ENCODE measurements at regions of chr12 and their contacts with region 1.

Region 1: GRCh38 chr12:71746983-71747611 is 7.6 kb upstream of the RAB21 start:
- DNase-seq: peak in 8 of 9 experiments; percentile 21 to 78 (median 46)
- ATAC-seq: peak; percentile 98
- H3K4me3 ChIP-seq: no peak overlapping the region
- H3K4me3 Mint-ChIP-seq: no peak overlapping the region
- H3K27ac ChIP-seq: no peak overlapping the region
- H3K27ac Mint-ChIP-seq: no peak overlapping the region
- H3K4me1 ChIP-seq: no peaks in the 10 kb centered on the region
- H3K4me1 Mint-ChIP-seq: no peaks in the 10 kb centered on the region
- H3K27me3 ChIP-seq: no peaks in the 10 kb centered on the region
- H3K27me3 Mint-ChIP-seq: peaks cover 18% of the 10 kb centered on the region
- CTCF ChIP-seq: peak; percentile 91

Region 2: DNA sequence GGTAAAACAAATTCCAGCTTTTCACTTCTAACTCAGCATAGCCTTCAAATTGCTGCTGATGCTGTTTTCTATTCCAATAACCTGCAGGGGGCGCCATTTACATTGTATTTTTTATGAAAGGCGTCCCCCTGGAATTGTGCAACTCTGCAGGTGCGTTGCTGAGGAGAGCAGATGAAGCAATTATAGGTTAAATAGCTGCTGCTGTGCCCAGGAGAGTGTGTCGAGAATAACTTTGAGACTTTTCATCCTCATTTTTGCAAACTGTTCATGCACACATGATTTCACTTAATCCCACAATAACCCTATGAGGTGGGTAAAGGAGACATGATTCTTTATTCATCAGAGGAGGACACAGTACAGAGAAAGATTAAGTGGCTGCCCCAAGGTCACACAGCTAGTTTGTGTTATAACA is 1846.4 kb before region 1 on chr12:
- CTCF ChIA-PET with region 1: interaction called, 8 read pairs
- POLR2A ChIA-PET with region 1: no interaction called
- intact Hi-C with region 1: loop called in 1 of 2 experiments (anchors 5 kb)
- DNase-seq: peak; percentile 18 to 77 (median 62)
- ATAC-seq: no peak
- H3K4me3 ChIP-seq: no peak overlapping the region
- H3K4me3 Mint-ChIP-seq: no peak overlapping the region
- H3K27ac ChIP-seq: no peak overlapping the region
- H3K27ac Mint-ChIP-seq: no peak overlapping the region
- H3K4me1 ChIP-seq: no peaks in the 10 kb centered on the region
- H3K4me1 Mint-ChIP-seq: no peaks in the 10 kb centered on the region
- H3K27me3 ChIP-seq: no peaks in the 10 kb centered on the region
- H3K27me3 Mint-ChIP-seq: peaks cover 3% of the 10 kb centered on the region
- CTCF ChIP-seq: peak; percentile 91

Region 3: GRCh38 chr12:70733385-70733784 is 1013.7 kb before region 1 on chr12:
- CTCF ChIA-PET with region 1: interaction called, 4 read pairs
- POLR2A ChIA-PET with region 1: no interaction called
- intact Hi-C with region 1: loop called (anchors 5 to 10 kb)
- DNase-seq: peak in 2 of 9 experiments; percentile 19 to 52
- ATAC-seq: no peak
- H3K4me3 ChIP-seq: no peak overlapping the region
- H3K4me3 Mint-ChIP-seq: no peak overlapping the region
- H3K27ac ChIP-seq: no peak overlapping the region
- H3K27ac Mint-ChIP-seq: no peak overlapping the region
- H3K4me1 ChIP-seq: no peaks in the 10 kb centered on the region
- H3K4me1 Mint-ChIP-seq: no peaks in the 10 kb centered on the region
- H3K27me3 ChIP-seq: peaks cover 0 to 3% of the 10 kb centered on the region in 2 experiments
- H3K27me3 Mint-ChIP-seq: peaks cover 2% of the 10 kb centered on the region
- CTCF ChIP-seq: peak; percentile 31

Region 4: DNA sequence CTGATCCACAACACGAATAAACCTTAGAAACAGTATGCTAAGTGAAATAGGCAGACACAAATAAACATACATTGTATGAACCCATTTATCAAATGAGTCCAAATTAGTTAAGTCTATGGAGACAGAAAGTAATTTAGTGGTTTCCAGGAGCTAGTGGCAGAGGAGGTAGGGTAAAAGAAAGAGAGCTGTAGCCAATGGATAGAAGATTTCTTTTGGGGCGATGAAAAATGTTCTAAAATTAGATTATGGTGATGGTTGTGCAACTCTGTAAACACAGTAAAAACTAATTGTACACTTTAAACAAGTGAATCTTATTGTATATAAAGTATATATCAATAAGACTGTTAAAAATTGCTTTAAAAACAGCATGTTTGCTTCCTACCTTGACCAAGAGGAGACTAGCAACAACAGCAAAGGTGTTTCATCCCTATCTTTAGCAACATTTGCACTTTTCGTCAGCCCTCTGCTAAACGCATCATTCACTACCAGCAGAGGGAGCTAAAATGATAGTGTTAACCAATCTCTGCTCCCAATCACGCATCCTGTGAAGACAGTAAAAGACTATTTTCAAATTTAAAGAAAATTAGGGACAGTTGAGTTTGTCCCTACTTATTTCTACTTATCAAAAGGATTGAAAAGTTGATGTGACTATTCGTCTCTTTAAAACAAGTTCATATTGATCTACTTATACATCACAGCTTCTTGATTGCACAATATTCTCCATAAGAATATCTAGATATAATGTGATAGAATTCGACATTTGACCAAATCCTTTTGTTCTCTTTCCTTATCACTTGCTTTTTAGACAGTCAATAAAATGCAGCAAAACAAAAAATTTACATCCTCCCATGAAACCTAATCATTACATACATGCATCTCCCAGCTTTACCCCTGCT is 331.5 kb before region 1 on chr12:
- CTCF ChIA-PET with region 1: interaction called, 81 read pairs
- POLR2A ChIA-PET with region 1: interaction called, 6 read pairs
- intact Hi-C with region 1: loop called (anchors 1 kb)
- DNase-seq: peak in 3 of 9 experiments; percentile 9 to 66 (median 54)
- ATAC-seq: no peak
- H3K4me3 ChIP-seq: no peak overlapping the region
- H3K4me3 Mint-ChIP-seq: no peak overlapping the region
- H3K27ac ChIP-seq: no peak overlapping the region
- H3K27ac Mint-ChIP-seq: no peak overlapping the region
- H3K4me1 ChIP-seq: no peaks in the 10 kb centered on the region
- H3K4me1 Mint-ChIP-seq: no peaks in the 10 kb centered on the region
- H3K27me3 ChIP-seq: no peaks in the 10 kb centered on the region
- H3K27me3 Mint-ChIP-seq: peaks cover 3% of the 10 kb centered on the region
- CTCF ChIP-seq: peak; percentile 68

Region 5: DNA sequence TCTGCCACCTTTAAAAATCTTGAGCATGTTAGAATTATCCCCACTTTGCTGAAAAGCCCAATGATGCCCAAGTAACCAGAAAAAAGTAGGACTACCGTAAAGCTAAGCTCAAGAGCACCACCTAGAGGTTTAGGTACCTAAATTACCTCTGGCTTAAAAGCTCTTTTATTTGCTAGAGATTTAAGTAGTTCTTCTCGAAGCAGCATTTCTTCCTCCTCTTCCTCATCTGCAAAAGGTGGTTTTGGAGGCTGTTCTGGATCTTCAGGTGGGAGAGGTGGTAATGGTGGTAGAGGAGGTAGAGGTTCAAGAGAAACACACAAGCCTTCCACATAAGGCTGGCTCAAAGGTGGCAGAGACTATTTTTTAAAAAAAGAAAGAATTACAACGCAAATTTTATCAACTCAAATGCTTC is 110.4 kb before region 1 on chr12:
- CTCF ChIA-PET with region 1: interaction called, 15 read pairs
- POLR2A ChIA-PET with region 1: no interaction called
- intact Hi-C with region 1: loop called (anchors 1 to 2 kb)
- DNase-seq: peak in 2 of 9 experiments; percentile 69 to 79
- ATAC-seq: peak; percentile 80
- H3K4me3 ChIP-seq: no peak overlapping the region
- H3K4me3 Mint-ChIP-seq: no peak overlapping the region
- H3K27ac ChIP-seq: no peak overlapping the region
- H3K27ac Mint-ChIP-seq: peak overlapping the region; percentile 78
- H3K4me1 ChIP-seq: no peaks in the 10 kb centered on the region
- H3K4me1 Mint-ChIP-seq: peaks cover 13% of the 10 kb centered on the region
- H3K27me3 ChIP-seq: no peaks in the 10 kb centered on the region
- H3K27me3 Mint-ChIP-seq: no peaks in the 10 kb centered on the region
- CTCF ChIP-seq: peak; percentile 82

Region 6: GRCh38 chr12:71685914-71686665 is 61.0 kb before region 1 on chr12 and contains the start of gene TMEM19:
- CTCF ChIA-PET with region 1: interaction called, 23 read pairs
- POLR2A ChIA-PET with region 1: interaction called, 4 read pairs
- intact Hi-C with region 1: no loop called
- DNase-seq: peak; percentile 65 to 92 (median 83)
- ATAC-seq: peak; percentile 88
- H3K4me3 ChIP-seq: peak within 1 kb of the TSS; percentile 66 to 95
- H3K4me3 Mint-ChIP-seq: peak within 1 kb of the TSS; percentile 96
- H3K27ac ChIP-seq: peak within 1 kb of the TSS; percentile 71 to 74
- H3K27ac Mint-ChIP-seq: peak within 1 kb of the TSS; percentile 94
- H3K4me1 ChIP-seq: peaks cover 33% of the 10 kb centered on the region
- H3K4me1 Mint-ChIP-seq: peaks cover 45% of the 10 kb centered on the region
- H3K27me3 ChIP-seq: no peaks in the 10 kb centered on the region
- H3K27me3 Mint-ChIP-seq: no peaks in the 10 kb centered on the region
- CTCF ChIP-seq: no peak
- total RNA-seq, gene TMEM19: 8.8 to 10.0 TPM

Region 7: DNA sequence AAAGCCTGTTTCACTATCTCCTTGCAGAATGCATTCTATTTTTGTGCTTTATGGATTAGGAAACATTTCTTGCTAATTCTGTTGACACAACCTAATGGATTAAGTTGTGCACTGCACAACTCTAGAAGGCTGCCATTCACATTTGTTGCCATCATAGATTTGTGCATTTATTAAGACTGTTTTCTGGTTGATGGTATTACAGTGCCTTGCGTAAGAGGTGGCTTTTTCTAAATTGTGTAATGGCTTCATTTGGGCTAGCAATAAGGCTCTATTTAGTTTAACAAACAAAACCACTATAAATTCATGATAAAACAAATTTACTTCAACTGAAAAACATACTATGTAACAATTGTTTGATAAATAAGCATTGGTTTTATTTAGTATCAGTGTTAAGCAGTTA is 701.0 kb after region 1 on chr12:
- CTCF ChIA-PET with region 1: no interaction called
- POLR2A ChIA-PET with region 1: no interaction called
- intact Hi-C with region 1: no loop called
- DNase-seq: no peak
- ATAC-seq: no peak
- H3K4me3 ChIP-seq: no peak overlapping the region
- H3K4me3 Mint-ChIP-seq: no peak overlapping the region
- H3K27ac ChIP-seq: no peak overlapping the region
- H3K27ac Mint-ChIP-seq: no peak overlapping the region
- H3K4me1 ChIP-seq: no peaks in the 10 kb centered on the region
- H3K4me1 Mint-ChIP-seq: no peaks in the 10 kb centered on the region
- H3K27me3 ChIP-seq: no peaks in the 10 kb centered on the region
- H3K27me3 Mint-ChIP-seq: no peaks in the 10 kb centered on the region
- CTCF ChIP-seq: no peak

Measured in CD8-positive, alpha-beta T cell (primary cell).